PC-3 (cell line): ENCODE measurements at regions of chr4 and their contacts with region 1.

Region 1: GRCh38 chr4:176319704-176320339 is at the start of gene SPCS3:
- DNase-seq: peak; percentile 95
- ATAC-seq: peak; percentile 91
- H3K4me3 ChIP-seq: peak within 1 kb of the TSS; percentile 79
- H3K27ac ChIP-seq: peak within 1 kb of the TSS; percentile 80
- H3K4me1 ChIP-seq: peaks cover 14% of the 10 kb centered on the region; the same call in 1 of the 2 replicates
- H3K27me3 ChIP-seq: no peaks in the 10 kb centered on the region
- CTCF ChIP-seq: no peak
- total RNA-seq, gene SPCS3: 42.4 and 56.1 TPM in 2 replicates

Region 2: GRCh38 chr4:176150356-176150682 is 169.5 kb before region 1 on chr4:
- CTCF ChIA-PET with region 1: no interaction called
- POLR2A ChIA-PET with region 1: no interaction called
- intact Hi-C with region 1: loop called (anchors 5 kb)
- DNase-seq: peak; percentile 47
- ATAC-seq: peak; percentile 60
- H3K4me3 ChIP-seq: no peak overlapping the region
- H3K27ac ChIP-seq: no peak overlapping the region; the same call in 1 of the 2 replicates
- H3K4me1 ChIP-seq: peaks cover 7% of the 10 kb centered on the region; the same call in 1 of the 2 replicates
- H3K27me3 ChIP-seq: no peaks in the 10 kb centered on the region
- CTCF ChIP-seq: peak; percentile 63

Region 3: DNA sequence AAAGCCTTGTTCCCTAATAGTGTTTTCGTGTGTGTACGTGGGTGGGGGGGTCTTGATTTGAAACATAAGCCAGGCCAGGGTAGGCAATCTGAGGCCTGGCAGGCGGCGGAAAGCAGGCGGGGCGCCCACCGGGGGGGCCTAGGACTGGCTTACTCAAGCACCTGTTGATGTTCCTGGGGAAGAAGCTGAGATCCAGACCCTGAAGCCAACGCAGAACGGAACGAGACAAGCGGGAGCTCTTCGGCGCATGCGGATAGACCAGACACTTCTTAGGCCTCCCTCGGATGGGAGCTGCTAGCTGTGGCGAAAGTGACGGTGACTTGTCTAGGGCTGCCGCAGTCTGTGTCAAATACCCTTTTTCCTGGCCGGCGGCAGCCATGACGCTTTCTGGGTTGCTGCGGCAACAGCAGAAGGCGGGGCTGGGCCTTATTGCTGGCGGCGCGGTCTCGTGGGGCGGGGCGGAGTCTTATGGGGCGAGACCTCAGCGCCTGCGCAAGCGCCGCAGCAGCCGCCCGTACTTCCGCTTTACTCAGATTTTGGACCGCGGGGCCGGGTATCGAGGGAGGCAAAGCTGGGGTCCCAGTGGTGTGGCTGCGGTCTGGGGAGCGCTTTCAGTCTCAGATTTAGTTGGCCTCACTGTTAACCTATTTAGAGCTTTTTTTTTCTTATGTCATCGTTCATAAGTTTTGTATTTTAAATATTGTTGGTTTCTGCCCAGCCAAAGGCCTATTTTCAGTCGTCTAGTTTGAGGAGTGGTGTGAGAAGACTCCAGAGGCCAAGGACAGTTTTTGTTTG is 124.4 kb before region 1 on chr4 and contains the start of gene SPATA4:
- CTCF ChIA-PET with region 1: no interaction called
- POLR2A ChIA-PET with region 1: no interaction called
- intact Hi-C with region 1: loop called (anchors 1 kb)
- DNase-seq: peak; percentile 76
- ATAC-seq: peak; percentile 68
- H3K4me3 ChIP-seq: peak within 1 kb of the TSS; percentile 82
- H3K27ac ChIP-seq: peak within 1 kb of the TSS; percentile 64
- H3K4me1 ChIP-seq: peaks cover 43% of the 10 kb centered on the region
- H3K27me3 ChIP-seq: no peaks in the 10 kb centered on the region
- CTCF ChIP-seq: no peak
- total RNA-seq, gene SPATA4: 0.15 TPM in 1 of 2 replicates, not detected in the other

Region 4: DNA sequence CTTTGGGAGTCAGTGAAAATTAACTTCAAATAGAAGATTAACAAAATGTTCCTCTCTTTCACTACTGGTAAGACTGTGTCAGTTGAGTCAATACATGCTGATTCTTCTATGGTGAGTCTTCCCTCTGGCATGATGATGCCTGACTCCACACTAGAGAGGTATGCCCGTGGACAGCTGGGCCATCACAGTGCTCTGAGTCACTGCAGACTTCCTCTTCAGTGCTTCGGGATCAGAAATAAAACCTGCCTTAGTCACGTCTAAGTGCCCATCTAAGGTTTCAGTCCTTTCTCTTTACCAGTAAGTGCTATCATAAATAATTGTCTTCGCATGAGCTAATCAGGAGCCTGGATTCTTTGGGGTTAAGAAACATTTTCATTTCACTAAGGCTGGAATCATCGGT is 49.2 kb before region 1 on chr4:
- CTCF ChIA-PET with region 1: no interaction called
- POLR2A ChIA-PET with region 1: no interaction called
- intact Hi-C with region 1: loop called (anchors 5 kb)
- DNase-seq: peak; percentile 94
- ATAC-seq: peak; percentile 98
- H3K4me3 ChIP-seq: peak overlapping the region; percentile 48; the same call in 1 of the 2 replicates
- H3K27ac ChIP-seq: peak overlapping the region; percentile 72
- H3K4me1 ChIP-seq: peaks cover 46% of the 10 kb centered on the region
- H3K27me3 ChIP-seq: no peaks in the 10 kb centered on the region
- CTCF ChIP-seq: no peak

Region 5: GRCh38 chr4:176302283-176303275 is 17.2 kb before region 1 on chr4:
- CTCF ChIA-PET with region 1: no interaction called
- POLR2A ChIA-PET with region 1: no interaction called
- intact Hi-C with region 1: loop called (anchors 2 kb)
- DNase-seq: peak; percentile 85
- ATAC-seq: peak; percentile 96
- H3K4me3 ChIP-seq: no peak overlapping the region
- H3K27ac ChIP-seq: peak overlapping the region; percentile 12; the same call in 1 of the 2 replicates
- H3K4me1 ChIP-seq: peaks cover 23% of the 10 kb centered on the region
- H3K27me3 ChIP-seq: no peaks in the 10 kb centered on the region
- CTCF ChIP-seq: no peak